Right cardiac atrium (tissue), 5 donors: ENCODE measurements at regions of chr1 and their contacts with region 1.

Region 1: GRCh38 chr1:57424231-57425027 is 569 bp upstream of the DAB1 start:
- DNase-seq: peak; percentile 20 to 80 (median 52)
- ATAC-seq: peak; percentile 57 to 67
- H3K4me3 ChIP-seq: peak overlapping the region; percentile 69
- H3K27ac ChIP-seq: no peak overlapping the region
- H3K4me1 ChIP-seq: no peaks in the 10 kb centered on the region
- H3K27me3 ChIP-seq: no peaks in the 10 kb centered on the region

Region 2: DNA sequence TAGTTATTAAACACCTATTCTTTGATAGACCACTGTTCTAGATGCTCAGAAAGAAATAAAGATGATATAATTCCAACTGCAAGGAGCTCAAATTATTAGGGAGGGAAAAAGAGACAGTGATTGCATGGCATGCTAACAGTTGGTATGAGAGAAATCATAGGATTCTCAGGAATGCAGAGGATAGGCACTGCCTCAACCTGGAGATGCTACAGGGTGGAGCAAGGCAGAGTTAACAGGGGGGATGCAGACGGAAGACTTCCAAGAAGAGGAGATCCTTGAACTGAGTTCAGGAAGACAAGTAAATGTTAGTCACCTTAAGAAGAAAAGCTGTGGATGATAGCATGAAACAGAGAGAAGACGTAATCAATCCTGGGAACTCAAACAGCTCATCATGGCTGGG is 124.2 kb before region 1 on chr1:
- intact Hi-C with region 1: no loop called
- DNase-seq: no peak
- ATAC-seq: no peak
- H3K4me3 ChIP-seq: no peak overlapping the region
- H3K27ac ChIP-seq: no peak overlapping the region
- H3K4me1 ChIP-seq: no peaks in the 10 kb centered on the region
- H3K27me3 ChIP-seq: no peaks in the 10 kb centered on the region

Region 3: GRCh38 chr1:57860325-57860724 is 435.9 kb after region 1 on chr1:
- intact Hi-C with region 1: no loop called
- DNase-seq: no peak
- ATAC-seq: no peak
- H3K4me3 ChIP-seq: no peak overlapping the region
- H3K27ac ChIP-seq: no peak overlapping the region
- H3K4me1 ChIP-seq: no peaks in the 10 kb centered on the region
- H3K27me3 ChIP-seq: no peaks in the 10 kb centered on the region

Region 4: GRCh38 chr1:58047265-58047858 is 622.9 kb after region 1 on chr1:
- intact Hi-C with region 1: loop called in 2 of 4 experiments (anchors 10 kb)
- DNase-seq: peak; percentile 18 to 56 (median 56)
- ATAC-seq: no peak
- H3K4me3 ChIP-seq: no peak overlapping the region
- H3K27ac ChIP-seq: no peak overlapping the region
- H3K4me1 ChIP-seq: no peaks in the 10 kb centered on the region
- H3K27me3 ChIP-seq: no peaks in the 10 kb centered on the region